ENCODE measurements at regions of chr5 and their contacts with region 1.

Region 1: GRCh38 chr5:16934123-16934522 is 2.0 kb downstream of the MYO10 start:
- DNase-seq: peak; percentile 71
- ATAC-seq: peak; percentile 51
- H3K4me3 Mint-ChIP-seq: no peak overlapping the region
- H3K27ac Mint-ChIP-seq: no peak overlapping the region
- H3K4me1 Mint-ChIP-seq: peaks cover 22% of the 10 kb centered on the region
- H3K27me3 Mint-ChIP-seq: peaks cover 69% of the 10 kb centered on the region

Region 2: DNA sequence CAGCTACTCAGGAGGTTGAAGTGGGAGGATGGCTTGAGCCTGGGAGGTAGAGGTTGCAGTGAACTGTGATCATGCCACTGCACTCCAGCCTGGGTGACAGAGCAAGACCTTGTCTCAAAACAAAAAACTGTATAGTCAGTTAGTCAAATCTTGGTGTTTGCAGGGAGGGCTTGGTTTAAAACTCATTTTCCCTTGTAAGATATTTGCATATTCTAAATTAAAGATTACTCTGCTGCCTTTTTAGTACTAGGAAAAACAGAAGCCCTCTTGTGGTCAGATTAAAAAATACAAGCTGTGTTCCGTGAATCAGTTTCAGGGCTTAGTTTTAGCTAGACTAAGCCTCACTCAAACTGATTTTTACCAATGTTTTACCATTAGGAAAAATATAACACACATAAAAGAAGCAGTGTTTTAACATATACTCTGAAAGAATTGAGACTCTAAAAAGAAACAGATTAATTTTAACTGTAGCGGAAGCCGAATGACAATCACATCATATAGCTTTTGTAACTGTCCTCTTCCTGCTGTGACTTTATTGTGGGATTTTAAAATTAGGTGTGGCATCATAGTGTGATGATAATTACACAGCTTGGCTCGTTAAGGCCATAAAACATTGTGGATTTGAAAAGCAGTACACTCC is 198.4 kb after region 1 on chr5:
- CTCF ChIA-PET with region 1: interaction called, 3 read pairs
- POLR2A ChIA-PET with region 1: no interaction called
- intact Hi-C with region 1: loop called in 1 of 2 experiments (anchors 2 kb)
- DNase-seq: no peak
- ATAC-seq: no peak
- H3K4me3 Mint-ChIP-seq: no peak overlapping the region
- H3K27ac Mint-ChIP-seq: no peak overlapping the region
- H3K4me1 Mint-ChIP-seq: peaks cover 6% of the 10 kb centered on the region
- H3K27me3 Mint-ChIP-seq: peaks cover 23% of the 10 kb centered on the region

Measured in activated CD4-positive, alpha-beta T cell treated with anti-CD3 and anti-CD28 coated beads for 36 hours (primary cell).